ENCODE measurements at regions of chr11 and their contacts with region 1.

Region 1: GRCh38 chr11:71448257-71449171 is at the start of gene DHCR7:
- DNase-seq: peak; percentile 93
- ATAC-seq: peak; percentile 81
- H3K4me3 Mint-ChIP-seq: peak within 1 kb of the TSS; percentile 92
- H3K27ac Mint-ChIP-seq: peak within 1 kb of the TSS; percentile 71
- H3K4me1 Mint-ChIP-seq: peaks cover 46% of the 10 kb centered on the region
- H3K27me3 Mint-ChIP-seq: no peaks in the 10 kb centered on the region
- CTCF ChIP-seq: no peak
- total RNA-seq, gene DHCR7: 35.5 and 47.2 TPM in 2 replicates

Region 2: DNA sequence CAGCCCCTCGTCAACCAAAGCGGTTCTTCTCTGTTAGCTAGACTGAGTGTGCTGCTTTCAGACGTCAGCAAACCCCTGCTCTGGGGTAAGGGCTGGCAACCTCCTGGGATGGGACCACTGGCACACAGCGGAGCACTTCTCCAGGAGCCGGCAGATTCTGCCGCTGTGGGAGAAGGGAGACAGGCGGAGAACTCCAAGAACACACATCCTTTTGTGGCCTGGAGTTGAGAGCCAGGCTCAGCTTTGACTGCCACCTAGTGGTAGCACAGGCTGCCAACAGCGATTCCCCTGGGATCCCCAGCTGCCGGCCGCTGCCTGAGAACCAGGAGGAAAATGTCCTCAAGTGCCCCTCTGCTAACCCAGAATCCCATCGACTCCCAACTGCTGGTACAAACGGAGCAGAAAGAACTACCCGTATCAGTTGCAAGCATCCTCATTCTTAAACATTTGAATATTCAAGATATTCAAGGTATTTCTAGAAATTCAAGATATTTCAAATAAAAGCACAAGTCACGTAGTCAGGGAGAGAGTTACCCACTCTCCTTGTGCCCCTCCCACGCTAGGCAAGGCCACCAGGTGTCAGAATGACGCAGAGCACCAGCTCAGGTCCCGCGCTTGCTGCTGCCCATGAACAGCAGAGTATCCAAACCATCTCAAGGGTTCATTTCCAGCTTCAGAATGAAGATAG is 1778.2 kb before region 1 on chr11:
- CTCF ChIA-PET with region 1: no interaction called
- POLR2A ChIA-PET with region 1: no interaction called
- intact Hi-C with region 1: loop called (anchors 10 kb)
- DNase-seq: peak; percentile 58
- ATAC-seq: peak; percentile 31
- H3K4me3 Mint-ChIP-seq: peak overlapping the region; percentile 24
- H3K27ac Mint-ChIP-seq: no peak overlapping the region
- H3K4me1 Mint-ChIP-seq: peaks cover 28% of the 10 kb centered on the region
- H3K27me3 Mint-ChIP-seq: peaks cover under 1% of the 10 kb centered on the region
- CTCF ChIP-seq: peak; percentile 27

Region 3: GRCh38 chr11:70202898-70203748 is 1245.4 kb before region 1 on chr11 and contains the start of gene FADD:
- CTCF ChIA-PET with region 1: no interaction called
- POLR2A ChIA-PET with region 1: no interaction called
- intact Hi-C with region 1: loop called (anchors 2 kb)
- DNase-seq: peak; percentile 83
- ATAC-seq: peak; percentile 66
- H3K4me3 Mint-ChIP-seq: peak within 1 kb of the TSS; percentile 93
- H3K27ac Mint-ChIP-seq: peak within 1 kb of the TSS; percentile 92
- H3K4me1 Mint-ChIP-seq: peaks cover 28% of the 10 kb centered on the region
- H3K27me3 Mint-ChIP-seq: no peaks in the 10 kb centered on the region
- CTCF ChIP-seq: no peak
- total RNA-seq, gene FADD: 29.5 and 31.2 TPM in 2 replicates

Region 4: DNA sequence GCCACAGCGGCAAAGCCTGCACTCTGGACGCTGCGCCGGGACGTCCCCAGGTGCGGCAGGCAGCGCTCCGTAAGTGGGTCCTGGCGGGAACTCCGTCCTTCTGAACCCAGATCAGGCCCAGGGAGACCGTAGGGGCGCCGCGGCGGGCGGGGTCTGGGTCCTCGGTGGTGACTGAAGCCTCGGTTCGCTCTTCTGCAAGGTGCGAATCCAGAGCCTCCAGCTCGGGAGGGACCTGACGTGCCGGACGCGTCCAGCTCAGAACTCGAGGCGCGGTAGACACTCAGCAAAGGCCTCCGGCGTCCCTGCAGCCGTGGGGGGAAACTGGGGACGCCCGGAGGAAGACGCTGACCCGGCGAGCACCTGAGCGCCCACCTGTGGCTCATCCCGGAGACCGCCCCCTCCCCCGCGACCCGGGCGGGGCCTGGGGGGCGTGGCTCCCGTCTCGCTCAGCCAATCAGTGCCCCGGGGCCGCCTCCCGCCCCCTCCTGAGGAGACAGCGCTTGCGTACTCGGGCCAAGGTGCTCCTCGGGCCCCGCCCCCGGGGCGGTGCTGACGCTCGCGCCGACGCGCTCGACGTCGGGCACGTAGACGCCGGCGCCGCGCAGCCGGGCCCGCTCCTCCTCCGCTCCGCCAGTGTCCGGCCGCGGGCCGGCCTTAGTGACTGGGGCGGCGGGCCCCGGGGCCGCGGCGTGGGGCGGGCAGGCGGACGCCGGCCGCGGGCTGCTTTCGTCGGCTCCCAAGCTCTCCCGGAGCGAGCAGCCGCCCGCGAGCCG is 1178.2 kb before region 1 on chr11 and contains the start of gene PPFIA1:
- CTCF ChIA-PET with region 1: no interaction called
- POLR2A ChIA-PET with region 1: no interaction called
- intact Hi-C with region 1: loop called (anchors 2 kb)
- DNase-seq: peak; percentile 98
- ATAC-seq: peak; percentile 94
- H3K4me3 Mint-ChIP-seq: peak within 1 kb of the TSS; percentile 86
- H3K27ac Mint-ChIP-seq: no peak within 1 kb of the TSS
- H3K4me1 Mint-ChIP-seq: peaks cover 33% of the 10 kb centered on the region
- H3K27me3 Mint-ChIP-seq: peaks cover 9% of the 10 kb centered on the region
- CTCF ChIP-seq: no peak
- total RNA-seq, gene PPFIA1: 52.3 and 53.3 TPM in 2 replicates

Region 5: GRCh38 chr11:71251761-71252443 is 196.6 kb before region 1 on chr11:
- CTCF ChIA-PET with region 1: no interaction called
- POLR2A ChIA-PET with region 1: no interaction called
- intact Hi-C with region 1: loop called (anchors 5 kb)
- DNase-seq: peak; percentile 73
- ATAC-seq: peak; percentile 91
- H3K4me3 Mint-ChIP-seq: peak overlapping the region; percentile 61
- H3K27ac Mint-ChIP-seq: no peak overlapping the region
- H3K4me1 Mint-ChIP-seq: peaks cover 25% of the 10 kb centered on the region
- H3K27me3 Mint-ChIP-seq: peaks cover 53% of the 10 kb centered on the region
- CTCF ChIP-seq: no peak

Region 6: DNA sequence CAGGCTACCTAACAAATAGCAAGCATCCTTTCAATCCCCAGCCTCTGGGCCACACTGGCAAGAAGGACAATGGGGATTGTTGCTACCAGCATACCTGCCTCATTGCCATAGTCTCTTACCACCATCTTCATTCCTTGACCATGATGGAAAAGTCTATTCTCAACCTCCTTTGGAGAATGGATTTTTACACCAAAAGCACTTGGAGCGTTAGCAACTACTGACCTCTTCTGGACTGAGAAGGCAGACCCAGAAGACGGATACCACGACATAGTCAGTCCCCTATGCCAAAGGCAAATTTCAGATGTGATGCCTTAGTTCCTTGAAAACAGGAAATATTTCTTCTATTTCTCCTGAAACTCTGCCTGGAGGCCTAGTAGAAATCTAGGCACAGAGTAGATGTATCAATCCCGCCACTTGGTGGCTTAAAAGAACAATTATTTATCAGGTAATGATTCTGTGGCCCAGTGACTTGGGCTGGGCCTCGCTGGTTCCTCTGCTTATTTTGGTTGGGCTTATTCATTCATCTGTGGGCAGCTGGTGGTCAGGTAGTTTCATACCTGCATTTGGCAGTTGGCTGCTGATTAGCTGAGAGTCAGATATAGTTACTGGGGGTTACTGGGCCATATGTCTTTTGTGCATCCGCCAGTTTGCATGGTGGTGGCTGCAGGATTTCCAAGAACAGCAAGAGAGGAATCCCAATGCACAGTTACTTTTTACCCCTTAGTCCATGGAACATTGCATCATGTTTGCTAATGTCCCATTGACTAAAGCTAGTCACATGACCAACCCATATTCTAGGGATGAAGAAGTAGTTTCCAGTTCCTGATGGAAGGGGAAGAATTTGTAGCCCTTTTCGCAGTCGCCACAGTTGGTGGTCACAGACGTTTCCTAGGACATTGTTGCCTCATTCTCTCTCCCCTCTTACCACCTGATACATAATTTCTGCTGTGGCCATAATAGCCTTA is 75.5 kb before region 1 on chr11:
- CTCF ChIA-PET with region 1: interaction called, 3 read pairs
- POLR2A ChIA-PET with region 1: interaction called, 6 read pairs
- intact Hi-C with region 1: loop called (anchors 2 kb)
- DNase-seq: no peak
- ATAC-seq: no peak
- H3K4me3 Mint-ChIP-seq: peak overlapping the region; percentile 32
- H3K27ac Mint-ChIP-seq: no peak overlapping the region
- H3K4me1 Mint-ChIP-seq: peaks cover 70% of the 10 kb centered on the region
- H3K27me3 Mint-ChIP-seq: peaks cover 12% of the 10 kb centered on the region
- CTCF ChIP-seq: no peak

Measured in activated B cell treated with CpG ODN at 0.5 μM for 24 hours (primary cell).